ENCODE measurements at regions of chr11 and their contacts with region 1.

Region 1: GRCh38 chr11:110711776-110712658 is at the start of gene ARHGAP20:
- DNase-seq: peak; percentile 62
- H3K4me3 ChIP-seq: peak within 1 kb of the TSS; percentile 41 to 55 (median 55)
- H3K27ac ChIP-seq: no peak within 1 kb of the TSS
- H3K4me1 ChIP-seq: peaks cover 21% of the 10 kb centered on the region
- H3K27me3 ChIP-seq: no peaks in the 10 kb centered on the region
- CTCF ChIP-seq: no peak
- POLR2A ChIP-seq: peak; percentile 25
- total RNA-seq, gene ARHGAP20: 1.1 and 1.4 TPM in 2 replicates

Region 2: GRCh38 chr11:108887436-108888238 is 1824.4 kb before region 1 on chr11:
- CTCF ChIA-PET with region 1: no interaction called
- POLR2A ChIA-PET with region 1: no interaction called
- dilution Hi-C with region 1: no loop called
- intact Hi-C with region 1: loop called (anchors 5 kb)
- DNase-seq: no peak
- H3K4me3 ChIP-seq: no peak overlapping the region
- H3K27ac ChIP-seq: no peak overlapping the region
- H3K4me1 ChIP-seq: peaks cover 21% of the 10 kb centered on the region
- H3K27me3 ChIP-seq: no peaks in the 10 kb centered on the region
- CTCF ChIP-seq: no peak
- POLR2A ChIP-seq: no peak

Region 3: DNA sequence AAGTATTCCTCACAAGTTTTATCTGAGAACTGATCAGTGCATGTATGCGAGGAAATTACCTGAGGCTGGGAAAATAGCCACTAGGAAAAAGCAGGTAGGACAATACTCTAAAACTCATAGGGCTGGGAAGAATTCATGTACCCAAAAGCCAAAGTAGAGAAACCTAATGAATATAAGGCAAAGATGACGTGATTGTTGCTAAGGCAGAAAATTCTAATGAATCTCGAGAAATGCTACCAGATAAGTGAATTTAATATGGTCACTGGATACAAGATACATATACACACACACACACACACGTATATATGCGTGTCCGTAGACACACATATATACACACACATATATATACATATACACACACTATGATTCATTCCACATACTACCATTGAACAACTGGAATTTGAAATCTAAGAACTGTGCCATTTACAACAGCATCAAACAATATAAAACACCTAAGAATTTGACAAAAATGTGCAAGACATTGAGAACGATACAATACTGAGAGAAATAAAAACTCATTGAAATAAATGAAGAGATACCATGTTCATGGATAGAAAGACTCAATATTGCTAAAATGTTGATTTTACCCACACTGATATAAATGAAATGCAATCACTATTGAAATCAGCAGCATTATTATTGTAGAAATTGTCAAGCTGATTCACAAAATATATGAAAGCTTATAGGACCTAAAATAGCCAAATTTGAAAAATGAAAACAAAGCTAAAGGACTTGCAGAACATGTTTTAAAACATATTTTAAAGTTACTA is 46.1 kb before region 1 on chr11:
- CTCF ChIA-PET with region 1: no interaction called
- POLR2A ChIA-PET with region 1: no interaction called
- dilution Hi-C with region 1: no loop called
- intact Hi-C with region 1: no loop called
- DNase-seq: no peak
- H3K4me3 ChIP-seq: no peak overlapping the region
- H3K27ac ChIP-seq: no peak overlapping the region
- H3K4me1 ChIP-seq: no peaks in the 10 kb centered on the region
- H3K27me3 ChIP-seq: no peaks in the 10 kb centered on the region
- CTCF ChIP-seq: no peak
- POLR2A ChIP-seq: no peak

Region 4: GRCh38 chr11:110763249-110764011 is 51.4 kb after region 1 on chr11:
- CTCF ChIA-PET with region 1: no interaction called
- POLR2A ChIA-PET with region 1: no interaction called
- dilution Hi-C with region 1: no loop called
- intact Hi-C with region 1: no loop called
- DNase-seq: peak; percentile 72
- H3K4me3 ChIP-seq: no peak overlapping the region
- H3K27ac ChIP-seq: no peak overlapping the region
- H3K4me1 ChIP-seq: peaks cover 3% of the 10 kb centered on the region
- H3K27me3 ChIP-seq: no peaks in the 10 kb centered on the region
- CTCF ChIP-seq: no peak
- POLR2A ChIP-seq: no peak

Region 5: DNA sequence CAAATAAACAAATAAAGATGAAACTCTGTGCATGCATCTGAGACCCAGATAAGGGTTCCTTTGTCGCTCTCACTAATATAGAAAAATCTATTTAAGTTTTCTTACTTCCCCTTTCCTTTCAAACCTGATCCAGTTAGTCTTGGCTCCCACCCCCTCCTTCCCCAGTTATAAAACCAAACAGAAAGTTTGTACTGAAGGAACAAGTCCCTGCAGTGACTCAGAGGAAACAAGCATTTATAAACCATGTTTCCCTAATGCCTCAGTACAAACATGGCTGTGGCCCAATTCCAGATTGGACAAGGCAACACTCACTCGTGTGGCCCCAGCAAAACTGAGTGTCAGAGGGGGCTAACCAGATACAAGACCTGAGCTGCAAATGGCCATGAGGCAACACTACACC is 65.8 kb after region 1 on chr11:
- CTCF ChIA-PET with region 1: no interaction called
- POLR2A ChIA-PET with region 1: no interaction called
- dilution Hi-C with region 1: no loop called
- intact Hi-C with region 1: loop called (anchors 5 kb)
- DNase-seq: peak; percentile 95
- H3K4me3 ChIP-seq: peak overlapping the region in 1 of 3 experiments; percentile 0
- H3K27ac ChIP-seq: peak overlapping the region; percentile 50
- H3K4me1 ChIP-seq: peaks cover 21% of the 10 kb centered on the region
- H3K27me3 ChIP-seq: no peaks in the 10 kb centered on the region
- CTCF ChIP-seq: no peak
- POLR2A ChIP-seq: no peak

Region 6: GRCh38 chr11:110833033-110833484 is 121.0 kb after region 1 on chr11:
- CTCF ChIA-PET with region 1: no interaction called
- POLR2A ChIA-PET with region 1: no interaction called
- dilution Hi-C with region 1: no loop called
- intact Hi-C with region 1: loop called (anchors 10 kb)
- DNase-seq: peak; percentile 84
- H3K4me3 ChIP-seq: no peak overlapping the region
- H3K27ac ChIP-seq: peak overlapping the region; percentile 60
- H3K4me1 ChIP-seq: peaks cover 44% of the 10 kb centered on the region
- H3K27me3 ChIP-seq: no peaks in the 10 kb centered on the region
- CTCF ChIP-seq: no peak
- POLR2A ChIP-seq: no peak

Region 7: GRCh38 chr11:110972640-110973039 is 260.6 kb after region 1 on chr11:
- CTCF ChIA-PET with region 1: no interaction called
- POLR2A ChIA-PET with region 1: no interaction called
- dilution Hi-C with region 1: no loop called
- intact Hi-C with region 1: loop called (anchors 5 kb)
- DNase-seq: no peak
- H3K4me3 ChIP-seq: no peak overlapping the region
- H3K27ac ChIP-seq: no peak overlapping the region
- H3K4me1 ChIP-seq: no peaks in the 10 kb centered on the region
- H3K27me3 ChIP-seq: no peaks in the 10 kb centered on the region
- CTCF ChIP-seq: no peak
- POLR2A ChIP-seq: no peak